Panc1 (cell line): ENCODE measurements at regions of chr11 and their contacts with region 1.

Region 1: DNA sequence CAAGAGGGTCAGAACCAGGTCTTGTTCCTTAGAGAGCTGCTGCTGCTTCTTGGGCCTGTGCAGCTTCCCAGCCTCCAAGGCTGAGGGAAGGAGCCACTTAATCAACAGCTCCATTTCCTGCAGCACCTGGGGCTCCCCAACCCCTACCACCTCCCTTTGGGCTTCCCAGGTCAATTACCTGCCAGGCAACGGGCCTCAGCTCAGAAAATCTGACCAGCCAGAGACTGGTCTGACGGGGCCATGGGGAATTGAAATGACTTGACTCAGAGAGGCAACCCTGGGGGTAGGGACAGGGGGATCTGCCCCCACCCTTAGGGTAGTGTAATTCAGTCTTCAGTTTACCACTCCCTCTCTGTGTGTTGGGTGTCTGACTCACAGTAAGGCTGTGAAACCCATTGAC is 4.7 kb upstream of the MAJIN start:
- DNase-seq: no peak
- ATAC-seq: no peak
- H3K4me3 ChIP-seq: no peak overlapping the region
- H3K27ac ChIP-seq: no peak overlapping the region
- H3K4me1 ChIP-seq: no peaks in the 10 kb centered on the region
- H3K27me3 ChIP-seq: no peaks in the 10 kb centered on the region
- CTCF ChIP-seq: no peak

Region 2: GRCh38 chr11:64960719-64961118 is 15.9 kb before region 1 on chr11:
- CTCF ChIA-PET with region 1: interaction called, 4 read pairs
- POLR2A ChIA-PET with region 1: interaction called, 15 read pairs
- in situ Hi-C with region 1: no loop called
- intact Hi-C with region 1: no loop called
- DNase-seq: no peak
- ATAC-seq: no peak
- H3K4me3 ChIP-seq: no peak overlapping the region
- H3K27ac ChIP-seq: no peak overlapping the region
- H3K4me1 ChIP-seq: no peaks in the 10 kb centered on the region
- H3K27me3 ChIP-seq: no peaks in the 10 kb centered on the region; the same call in 1 of the 2 replicates
- CTCF ChIP-seq: no peak

Region 3: DNA sequence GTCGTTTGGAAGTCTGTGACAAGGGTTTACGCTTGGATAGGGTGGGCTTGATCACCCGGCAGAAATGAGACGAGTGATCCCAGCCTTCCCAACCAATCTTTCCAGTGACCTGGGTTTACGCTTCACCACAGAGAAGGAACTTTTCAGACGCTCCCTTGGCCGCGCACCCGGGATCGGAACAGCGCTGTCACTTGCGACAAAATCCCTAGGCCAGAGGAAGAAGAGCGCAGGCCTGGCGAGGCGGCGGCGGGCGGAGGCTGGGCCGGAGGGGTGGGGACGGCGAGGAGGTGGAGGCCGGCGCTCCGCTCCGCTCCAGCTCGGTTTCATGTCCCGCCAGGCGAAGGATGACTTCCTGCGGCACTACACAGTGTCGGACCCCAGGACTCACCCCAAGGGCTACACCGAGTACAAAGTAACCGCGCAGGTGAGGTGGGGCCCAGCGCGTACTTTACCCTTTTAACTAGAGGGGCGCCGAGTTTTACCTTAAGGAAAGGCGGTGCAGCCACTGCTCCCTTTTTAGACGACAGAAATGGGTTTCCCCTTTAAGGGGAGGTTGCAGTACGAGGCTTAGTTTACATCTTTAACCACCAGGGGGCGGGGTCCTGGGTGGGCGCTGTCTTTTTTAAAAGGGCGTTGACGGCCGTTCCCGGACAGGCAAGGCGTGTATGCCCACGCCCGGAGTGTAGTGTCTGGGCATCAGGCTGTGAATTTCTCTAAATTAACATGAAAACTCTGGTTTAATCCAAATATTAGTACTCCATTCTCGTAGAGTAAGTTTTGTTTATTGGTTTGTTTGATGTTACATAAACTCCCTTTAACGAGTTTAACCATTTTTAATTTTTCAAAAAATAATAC is 50.8 kb after region 1 on chr11 and contains the start of gene SNX15:
- CTCF ChIA-PET with region 1: interaction called, 14 read pairs
- POLR2A ChIA-PET with region 1: no interaction called
- in situ Hi-C with region 1: no loop called
- intact Hi-C with region 1: no loop called
- DNase-seq: peak; percentile 90
- ATAC-seq: peak; percentile 99
- H3K4me3 ChIP-seq: peak within 1 kb of the TSS; percentile 56 to 60
- H3K27ac ChIP-seq: peak within 1 kb of the TSS; percentile 91
- H3K4me1 ChIP-seq: peaks cover 3% of the 10 kb centered on the region
- H3K27me3 ChIP-seq: no peaks in the 10 kb centered on the region
- CTCF ChIP-seq: no peak
- total RNA-seq, gene SNX15: 51.5 TPM